ENCODE measurements at regions of chr3 and their contacts with region 1.

Region 1: DNA sequence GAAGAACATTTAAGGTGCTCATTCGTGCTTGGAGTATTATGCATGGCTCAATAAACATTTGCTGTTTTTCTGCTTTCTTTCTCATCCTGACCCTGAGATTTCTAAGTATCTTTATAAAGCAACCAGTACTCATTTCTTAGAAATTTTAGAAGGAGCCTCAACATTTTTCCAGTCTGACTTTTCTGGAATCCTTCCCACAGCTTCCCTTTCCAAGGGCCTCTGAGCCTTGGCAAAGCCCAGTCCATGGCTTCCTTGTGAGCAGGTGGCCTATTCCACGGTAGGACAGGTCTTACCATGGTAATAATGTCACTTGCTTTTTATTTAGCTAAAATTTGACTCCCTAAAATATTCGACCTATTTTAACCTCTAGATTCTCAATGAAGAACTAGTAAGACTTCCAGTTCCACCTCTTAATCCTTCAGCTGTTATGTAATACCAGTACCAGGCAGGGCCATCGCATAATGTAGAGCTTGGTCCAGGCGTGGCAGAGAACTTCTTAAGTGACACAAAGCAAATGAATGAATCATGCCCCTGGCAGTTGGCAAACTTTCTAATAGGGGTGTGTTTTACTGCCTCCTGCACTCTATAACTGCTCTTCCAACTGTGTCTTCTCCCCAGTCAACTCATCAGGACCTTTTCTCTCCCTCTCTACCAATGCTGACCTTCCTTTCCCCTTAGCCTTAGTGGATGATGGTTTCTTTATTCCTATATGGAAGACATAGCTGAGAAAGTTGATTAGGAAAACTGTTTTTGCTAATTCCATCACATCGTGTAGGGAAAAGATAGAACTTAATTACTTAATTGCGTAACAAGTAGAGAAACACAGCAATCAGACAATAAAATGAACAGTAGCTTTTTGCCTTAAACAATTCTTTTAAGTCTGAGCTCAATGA is 894 bp upstream of the TM4SF4 start:
- DNase-seq: no peak
- H3K4me3 ChIP-seq: no peak overlapping the region
- H3K27ac ChIP-seq: peak overlapping the region; percentile 6
- H3K4me1 ChIP-seq: peaks cover 26% of the 10 kb centered on the region
- H3K27me3 ChIP-seq: no peaks in the 10 kb centered on the region
- CTCF ChIP-seq: no peak

Region 2: GRCh38 chr3:149129326-149130205 is 344.0 kb before region 1 on chr3 and contains the start of gene HPS3:
- intact Hi-C with region 1: loop called (anchors 10 kb)
- DNase-seq: peak; percentile 93
- H3K4me3 ChIP-seq: peak within 1 kb of the TSS; percentile 77
- H3K27ac ChIP-seq: peak within 1 kb of the TSS; percentile 82
- H3K4me1 ChIP-seq: peaks cover 50% of the 10 kb centered on the region
- H3K27me3 ChIP-seq: no peaks in the 10 kb centered on the region
- CTCF ChIP-seq: no peak
- total RNA-seq, gene HPS3: 5.6 TPM

Region 3: GRCh38 chr3:149352556-149352955 is 121.0 kb before region 1 on chr3:
- intact Hi-C with region 1: loop called (anchors 10 kb)
- DNase-seq: peak; percentile 36
- H3K4me3 ChIP-seq: no peak overlapping the region
- H3K27ac ChIP-seq: peak overlapping the region; percentile 13
- H3K4me1 ChIP-seq: peaks cover 8% of the 10 kb centered on the region
- H3K27me3 ChIP-seq: no peaks in the 10 kb centered on the region
- CTCF ChIP-seq: peak; percentile 80

Region 4: GRCh38 chr3:149393345-149394160 is 80.0 kb before region 1 on chr3:
- intact Hi-C with region 1: loop called (anchors 10 kb)
- DNase-seq: peak; percentile 68
- H3K4me3 ChIP-seq: no peak overlapping the region
- H3K27ac ChIP-seq: peak overlapping the region; percentile 55
- H3K4me1 ChIP-seq: peaks cover 29% of the 10 kb centered on the region
- H3K27me3 ChIP-seq: no peaks in the 10 kb centered on the region
- CTCF ChIP-seq: peak; percentile 87

Measured in left ventricle myocardium inferior (tissue), 1 donor.